ENCODE measurements at regions of chr2 and their contacts with region 1.

Region 1: GRCh38 chr2:72973566-72974435 is 56.5 kb downstream of the EMX1 start:
- DNase-seq: no peak
- ATAC-seq: peak; percentile 99
- H3K4me3 ChIP-seq: no peak overlapping the region
- H3K27ac ChIP-seq: no peak overlapping the region
- H3K4me1 ChIP-seq: no peaks in the 10 kb centered on the region
- H3K27me3 ChIP-seq: no peaks in the 10 kb centered on the region
- CTCF ChIP-seq: peak; percentile 85 to 95 (median 92)
- EP300 ChIP-seq: no peak
- POLR2A ChIP-seq: no peak
- RAD21 ChIP-seq: peak; percentile 75

Region 2: DNA sequence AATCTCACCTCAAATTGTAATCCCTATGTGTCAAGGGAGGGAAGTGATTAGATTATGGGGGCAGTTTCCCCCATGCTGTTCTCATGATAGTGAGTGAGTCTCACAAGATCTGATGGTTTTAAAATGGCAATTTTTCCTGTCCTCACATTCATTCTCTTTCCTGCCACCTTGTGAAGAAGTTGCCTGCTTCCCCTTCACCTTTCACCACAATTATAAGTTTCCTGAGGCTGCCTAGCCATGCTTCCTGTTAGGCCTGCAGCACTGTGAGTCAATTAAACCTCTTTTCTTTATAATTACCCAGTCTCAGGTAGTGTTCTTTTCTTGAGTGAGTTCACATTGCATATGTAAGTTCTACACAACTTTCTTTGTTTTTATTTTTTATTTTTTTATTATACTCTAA is 419.4 kb before region 1 on chr2:
- CTCF ChIA-PET with region 1: no interaction called
- POLR2A ChIA-PET with region 1: no interaction called
- RAD21 ChIA-PET with region 1: no interaction called
- SMC1A ChIA-PET with region 1: no interaction called
- in situ Hi-C with region 1: no loop called
- intact Hi-C with region 1: no loop called
- DNase-seq: no peak
- ATAC-seq: no peak
- H3K4me3 ChIP-seq: no peak overlapping the region
- H3K27ac ChIP-seq: no peak overlapping the region
- H3K4me1 ChIP-seq: no peaks in the 10 kb centered on the region
- H3K27me3 ChIP-seq: no peaks in the 10 kb centered on the region
- CTCF ChIP-seq: no peak
- EP300 ChIP-seq: no peak
- POLR2A ChIP-seq: no peak
- RAD21 ChIP-seq: no peak

Region 3: DNA sequence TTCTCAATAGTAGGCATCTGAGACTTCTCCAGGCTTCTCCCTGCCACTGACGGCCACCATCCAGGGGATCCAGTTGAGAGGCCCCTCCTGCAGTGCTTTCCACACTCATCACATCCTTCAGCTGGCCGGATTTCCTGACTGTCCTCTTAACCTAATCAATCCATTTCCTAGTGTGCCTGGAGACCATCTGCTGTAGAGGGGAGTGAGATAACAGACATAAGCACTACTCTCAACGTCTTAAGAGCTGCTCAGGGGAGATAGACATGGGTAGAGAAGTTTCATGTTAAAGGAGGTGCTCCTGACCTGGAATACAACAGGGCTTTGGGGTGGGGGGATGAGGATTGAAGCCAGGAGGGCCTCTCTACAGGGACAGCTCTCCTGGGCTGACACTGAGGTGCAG is 72.4 kb before region 1 on chr2:
- CTCF ChIA-PET with region 1: interaction called, 437 read pairs
- POLR2A ChIA-PET with region 1: no interaction called
- RAD21 ChIA-PET with region 1: interaction called, 182 read pairs
- SMC1A ChIA-PET with region 1: interaction called, 134 read pairs
- in situ Hi-C with region 1: no loop called
- intact Hi-C with region 1: no loop called
- DNase-seq: no peak
- ATAC-seq: no peak
- H3K4me3 ChIP-seq: no peak overlapping the region
- H3K27ac ChIP-seq: no peak overlapping the region
- H3K4me1 ChIP-seq: no peaks in the 10 kb centered on the region
- H3K27me3 ChIP-seq: no peaks in the 10 kb centered on the region; a peak in 1 of 4 replicates
- CTCF ChIP-seq: no peak
- EP300 ChIP-seq: no peak
- POLR2A ChIP-seq: no peak
- RAD21 ChIP-seq: no peak

Region 4: GRCh38 chr2:72915907-72916742 is 57.7 kb before region 1 on chr2:
- CTCF ChIA-PET with region 1: interaction called, 12 read pairs
- POLR2A ChIA-PET with region 1: no interaction called
- RAD21 ChIA-PET with region 1: interaction called, 11 read pairs
- SMC1A ChIA-PET with region 1: interaction called, 5 read pairs
- in situ Hi-C with region 1: no loop called
- intact Hi-C with region 1: loop called (anchors 2 kb)
- DNase-seq: no peak
- ATAC-seq: peak; percentile 85
- H3K4me3 ChIP-seq: peak overlapping the region; percentile 75
- H3K27ac ChIP-seq: peak overlapping the region; percentile 48
- H3K4me1 ChIP-seq: peaks cover 9% of the 10 kb centered on the region
- H3K27me3 ChIP-seq: peaks cover 8 to 52% of the 10 kb centered on the region in 2 experiments
- CTCF ChIP-seq: no peak
- EP300 ChIP-seq: peak in 1 of 2 experiments; percentile 28; a peak in 1 of 4 replicates
- POLR2A ChIP-seq: 0 out of 2 replicates have a peak, but pooled peaks have one; percentile 35
- RAD21 ChIP-seq: no peak

Region 5: GRCh38 chr2:72924353-72925240 is 49.2 kb before region 1 on chr2:
- CTCF ChIA-PET with region 1: interaction called, 6 read pairs
- POLR2A ChIA-PET with region 1: no interaction called
- RAD21 ChIA-PET with region 1: interaction called, 3 read pairs
- SMC1A ChIA-PET with region 1: interaction called, 15 read pairs
- in situ Hi-C with region 1: no loop called
- intact Hi-C with region 1: no loop called
- DNase-seq: no peak
- ATAC-seq: peak; percentile 62
- H3K4me3 ChIP-seq: no peak overlapping the region
- H3K27ac ChIP-seq: no peak overlapping the region
- H3K4me1 ChIP-seq: no peaks in the 10 kb centered on the region; the same call in 1 of the 2 replicates
- H3K27me3 ChIP-seq: peaks cover 7 to 43% of the 10 kb centered on the region in 2 experiments
- CTCF ChIP-seq: no peak
- EP300 ChIP-seq: peak in 1 of 2 experiments; percentile 31; a peak in 1 of 4 replicates
- POLR2A ChIP-seq: no peak
- RAD21 ChIP-seq: no peak

Region 6: DNA sequence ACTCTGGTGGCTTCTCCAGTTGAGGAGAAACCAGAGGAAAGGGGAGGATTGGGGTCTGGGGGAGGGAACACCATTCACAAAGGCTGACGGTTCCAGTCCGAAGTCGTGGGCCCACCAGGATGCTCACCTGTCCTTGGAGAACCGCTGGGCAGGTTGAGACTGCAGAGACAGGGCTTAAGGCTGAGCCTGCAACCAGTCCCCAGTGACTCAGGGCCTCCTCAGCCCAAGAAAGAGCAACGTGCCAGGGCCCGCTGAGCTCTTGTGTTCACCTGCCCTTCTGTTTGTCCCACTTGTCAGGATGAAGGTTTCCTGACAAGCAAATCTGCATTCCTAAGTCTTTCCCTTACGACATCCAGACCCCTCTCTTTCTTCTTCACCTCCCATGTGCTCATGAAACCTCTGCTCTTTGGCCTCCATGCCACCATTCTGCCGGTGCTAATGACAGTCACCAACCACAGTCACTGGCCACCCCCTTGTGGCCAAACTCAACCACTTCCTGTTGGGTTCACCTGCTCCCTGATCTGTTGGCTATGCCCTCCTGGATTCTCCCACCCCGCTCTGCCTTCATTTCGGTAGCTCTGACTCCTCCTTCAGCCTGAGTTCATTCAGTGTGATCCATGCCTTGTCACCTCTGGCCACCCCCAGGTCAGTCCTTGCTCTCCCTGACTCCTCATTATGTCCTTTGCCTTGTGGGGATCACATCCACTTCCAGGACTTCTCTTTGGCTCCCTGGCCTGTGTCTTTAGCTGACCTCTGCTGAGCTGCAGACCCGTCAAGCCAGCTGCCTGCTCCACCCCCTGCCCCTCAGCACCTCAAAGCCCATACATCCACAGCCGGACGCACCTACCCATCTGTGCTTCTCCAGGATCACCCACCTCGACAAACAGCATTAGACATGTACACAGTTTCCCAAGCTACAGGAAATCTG is 38.9 kb before region 1 on chr2:
- CTCF ChIA-PET with region 1: interaction called, 14 read pairs
- POLR2A ChIA-PET with region 1: no interaction called
- RAD21 ChIA-PET with region 1: interaction called, 4 read pairs
- SMC1A ChIA-PET with region 1: no interaction called
- in situ Hi-C with region 1: no loop called
- intact Hi-C with region 1: no loop called
- DNase-seq: no peak
- ATAC-seq: peak; percentile 88
- H3K4me3 ChIP-seq: no peak overlapping the region
- H3K27ac ChIP-seq: no peak overlapping the region
- H3K4me1 ChIP-seq: no peaks in the 10 kb centered on the region; the same call in 1 of the 2 replicates
- H3K27me3 ChIP-seq: no peaks in the 10 kb centered on the region; a peak in 1 of 4 replicates
- CTCF ChIP-seq: peak; percentile 38 to 63 (median 40); a peak in 5 of 6 replicates
- EP300 ChIP-seq: no peak
- POLR2A ChIP-seq: no peak
- RAD21 ChIP-seq: peak; percentile 67

Region 7: GRCh38 chr2:72963423-72964145 is 10.2 kb before region 1 on chr2:
- CTCF ChIA-PET with region 1: interaction called, 10 read pairs
- POLR2A ChIA-PET with region 1: no interaction called
- RAD21 ChIA-PET with region 1: interaction called, 4 read pairs
- SMC1A ChIA-PET with region 1: interaction called, 3 read pairs
- in situ Hi-C with region 1: no loop called
- intact Hi-C with region 1: no loop called
- DNase-seq: no peak
- ATAC-seq: no peak
- H3K4me3 ChIP-seq: no peak overlapping the region
- H3K27ac ChIP-seq: no peak overlapping the region
- H3K4me1 ChIP-seq: no peaks in the 10 kb centered on the region
- H3K27me3 ChIP-seq: no peaks in the 10 kb centered on the region; a peak in 1 of 4 replicates
- CTCF ChIP-seq: no peak
- EP300 ChIP-seq: no peak
- POLR2A ChIP-seq: no peak
- RAD21 ChIP-seq: no peak

Region 8: DNA sequence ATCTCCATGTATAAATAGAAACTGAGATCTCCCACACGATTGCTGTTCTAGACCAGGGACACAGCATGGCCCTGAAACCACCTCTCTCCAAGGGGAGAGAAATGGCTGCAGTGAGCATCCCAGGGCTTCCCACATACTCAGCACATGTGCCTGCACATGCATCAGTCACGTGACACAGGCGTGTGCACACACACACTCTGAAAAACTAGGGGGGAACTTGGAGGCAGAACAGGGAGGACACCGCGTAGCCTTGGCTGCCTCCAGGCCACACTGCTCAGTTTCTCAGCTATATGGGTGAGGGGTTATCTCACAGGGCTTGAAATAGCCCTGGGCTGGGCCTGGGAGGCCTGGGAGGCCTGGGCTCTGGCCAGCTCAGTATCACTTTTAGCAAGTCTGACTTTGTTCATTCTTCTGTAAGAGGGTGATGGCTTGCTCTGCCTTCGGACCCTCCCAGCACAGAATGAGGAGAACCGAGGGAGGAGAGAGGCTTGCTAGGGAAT is 10.4 kb after region 1 on chr2:
- CTCF ChIA-PET with region 1: interaction called, 23 read pairs
- POLR2A ChIA-PET with region 1: no interaction called
- RAD21 ChIA-PET with region 1: no interaction called
- SMC1A ChIA-PET with region 1: interaction called, 4 read pairs
- in situ Hi-C with region 1: no loop called
- intact Hi-C with region 1: no loop called
- DNase-seq: no peak
- ATAC-seq: no peak
- H3K4me3 ChIP-seq: no peak overlapping the region
- H3K27ac ChIP-seq: no peak overlapping the region
- H3K4me1 ChIP-seq: no peaks in the 10 kb centered on the region
- H3K27me3 ChIP-seq: no peaks in the 10 kb centered on the region
- CTCF ChIP-seq: no peak
- EP300 ChIP-seq: no peak
- POLR2A ChIP-seq: no peak
- RAD21 ChIP-seq: no peak

Region 9: GRCh38 chr2:73020657-73021370 is 47.0 kb after region 1 on chr2:
- CTCF ChIA-PET with region 1: no interaction called
- POLR2A ChIA-PET with region 1: no interaction called
- RAD21 ChIA-PET with region 1: no interaction called
- SMC1A ChIA-PET with region 1: no interaction called
- in situ Hi-C with region 1: no loop called
- intact Hi-C with region 1: no loop called
- DNase-seq: no peak
- ATAC-seq: no peak
- H3K4me3 ChIP-seq: no peak overlapping the region
- H3K27ac ChIP-seq: no peak overlapping the region
- H3K4me1 ChIP-seq: no peaks in the 10 kb centered on the region
- H3K27me3 ChIP-seq: no peaks in the 10 kb centered on the region
- CTCF ChIP-seq: no peak
- EP300 ChIP-seq: no peak
- POLR2A ChIP-seq: no peak
- RAD21 ChIP-seq: no peak